GM10248 (cell line): ENCODE measurements at regions of chr9 and their contacts with region 1.

Region 1: GRCh38 chr9:126558051-126558665 is 55.6 kb upstream of the LMX1B start:
- DNase-seq: peak; percentile 84
- CTCF ChIP-seq: peak; percentile 99

Region 2: GRCh38 chr9:126508161-126508958 is 49.8 kb before region 1 on chr9:
- CTCF ChIA-PET with region 1: interaction called, 193 read pairs
- POLR2A ChIA-PET with region 1: no interaction called
- DNase-seq: no peak
- CTCF ChIP-seq: no peak

Region 3: DNA sequence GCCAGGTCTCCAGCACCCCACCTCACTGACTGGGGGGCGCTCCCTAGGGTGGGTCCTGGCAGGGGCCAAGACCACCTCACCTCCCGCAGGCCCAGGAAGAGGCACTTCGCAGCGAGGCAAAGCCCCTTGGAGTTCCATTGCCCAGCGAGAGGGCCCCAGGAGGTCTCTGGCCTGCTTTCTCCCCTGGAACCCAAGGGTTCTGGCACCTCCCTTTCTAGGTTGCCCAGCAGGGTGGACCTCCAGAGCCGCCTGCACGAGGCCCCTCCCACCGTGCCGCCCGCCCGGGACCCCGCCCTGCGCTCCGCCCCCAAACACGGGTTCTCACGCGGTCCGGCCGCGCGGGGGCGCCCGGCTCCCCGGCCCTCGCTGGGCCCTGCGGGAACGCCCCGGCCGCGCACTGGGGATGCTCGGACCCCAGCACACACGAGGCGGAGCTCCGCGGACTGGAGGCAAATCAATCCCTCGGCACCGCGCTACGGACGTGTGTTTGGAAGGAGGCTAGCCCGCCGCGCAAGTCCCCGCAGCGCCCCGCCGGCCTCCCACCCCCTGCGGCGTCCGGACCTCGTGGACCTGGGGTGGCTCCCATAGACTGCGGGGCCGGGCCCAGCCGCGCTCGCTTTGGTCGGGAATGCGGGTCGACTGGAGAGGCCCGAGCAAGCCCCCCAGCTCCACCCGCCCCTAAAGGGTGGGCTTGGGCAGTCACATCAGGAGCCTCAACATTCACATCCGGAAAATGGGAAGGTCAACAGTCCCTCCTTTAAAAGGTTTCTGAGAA is 43.9 kb before region 1 on chr9:
- CTCF ChIA-PET with region 1: interaction called, 14 read pairs
- POLR2A ChIA-PET with region 1: no interaction called
- DNase-seq: peak; percentile 71
- CTCF ChIP-seq: no peak

Region 4: DNA sequence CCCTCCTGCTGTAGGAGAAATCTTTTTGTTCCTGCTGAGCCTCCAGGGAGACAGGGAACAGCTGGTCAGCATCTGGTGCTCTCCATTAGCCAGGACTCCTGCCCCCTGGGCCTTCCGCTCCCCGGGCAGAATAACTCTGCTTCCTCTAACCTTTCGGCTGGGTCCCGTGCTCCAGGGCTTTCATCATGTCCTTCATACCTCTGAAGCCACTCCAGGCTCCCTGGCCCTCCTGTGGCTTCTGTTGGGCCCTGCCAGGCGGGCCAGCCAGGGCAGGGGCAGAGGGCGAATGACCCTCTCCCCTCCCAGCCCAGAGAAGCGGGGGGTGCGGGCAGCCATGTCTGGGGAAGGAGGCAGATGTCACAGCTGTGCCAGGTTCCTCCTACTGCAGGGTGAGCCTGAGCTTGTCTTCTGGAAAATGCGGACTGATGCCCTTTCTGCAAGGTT is 26.1 kb before region 1 on chr9:
- CTCF ChIA-PET with region 1: interaction called, 12 read pairs
- POLR2A ChIA-PET with region 1: no interaction called
- DNase-seq: no peak
- CTCF ChIP-seq: no peak